Left cardiac atrium (tissue), 4 donors: ENCODE measurements at regions of chr7 and their contacts with region 1.

Region 1: GRCh38 chr7:151123822-151124464 is 37.7 kb downstream of the AGAP3 start:
- DNase-seq: peak; percentile 89
- ATAC-seq: peak; percentile 77 to 80

Region 2: GRCh38 chr7:150722431-150722931 is 401.5 kb before region 1 on chr7:
- intact Hi-C with region 1: no loop called
- DNase-seq: no peak
- ATAC-seq: peak; percentile 9 to 36

Region 3: GRCh38 chr7:151172273-151173141 is 48.6 kb after region 1 on chr7:
- intact Hi-C with region 1: loop called (anchors 1 to 5 kb)
- DNase-seq: peak; percentile 80
- ATAC-seq: peak; percentile 66 to 71

Region 4: GRCh38 chr7:151301471-151302462 is 177.8 kb after region 1 on chr7:
- intact Hi-C with region 1: loop called (anchors 2 to 5 kb)
- DNase-seq: no peak
- ATAC-seq: no peak